Activated CD4-positive, alpha-beta T cell treated with anti-CD3 and anti-CD28 coated beads for 36 hours (primary cell): ENCODE measurements at regions of chr11 and their contacts with region 1.

Region 1: DNA sequence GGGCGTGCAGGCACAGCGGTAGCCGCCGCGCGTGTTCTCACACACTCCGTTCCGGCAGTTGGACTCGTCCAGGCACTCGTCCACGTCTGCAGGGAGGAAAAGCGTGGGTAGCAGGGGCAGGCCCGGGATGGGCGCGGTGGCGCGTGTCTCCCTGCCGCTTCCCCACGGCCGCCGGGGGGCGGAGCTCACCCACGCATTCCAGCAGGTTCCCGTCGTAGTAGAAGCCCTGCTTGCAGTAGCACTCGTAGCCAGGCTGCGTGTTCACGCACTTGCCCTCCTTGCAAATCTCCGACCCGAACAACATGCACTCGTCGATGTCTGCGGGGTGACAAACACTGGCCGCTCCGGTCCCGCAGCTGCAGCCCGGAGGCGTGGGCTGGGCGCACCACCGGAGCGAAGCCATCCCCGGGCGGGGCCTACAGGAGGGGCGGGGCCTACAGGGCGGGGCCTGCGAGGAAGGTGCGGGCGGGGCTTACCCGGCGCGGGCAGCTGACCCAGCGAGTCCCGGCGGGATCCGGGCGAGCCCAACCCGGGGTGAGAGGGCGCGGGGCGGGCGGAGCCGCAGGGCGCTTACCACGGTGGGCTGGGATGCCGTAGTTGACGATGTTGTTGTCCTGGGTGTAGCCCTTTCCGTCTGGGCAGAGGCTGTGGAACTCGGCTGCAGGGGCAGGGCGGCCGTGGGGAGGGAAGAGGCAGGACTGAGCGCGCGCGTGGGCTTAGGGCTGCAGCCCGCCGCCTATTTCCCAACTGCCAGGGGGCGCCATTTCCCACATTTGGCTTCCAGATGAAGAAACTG is 15.6 kb downstream of the SCYL1 start:
- DNase-seq: peak; percentile 93
- ATAC-seq: peak; percentile 89
- H3K4me3 Mint-ChIP-seq: peak overlapping the region; percentile 72
- H3K27ac Mint-ChIP-seq: peak overlapping the region; percentile 81
- H3K4me1 Mint-ChIP-seq: peaks cover 15% of the 10 kb centered on the region
- H3K27me3 Mint-ChIP-seq: no peaks in the 10 kb centered on the region

Region 2: DNA sequence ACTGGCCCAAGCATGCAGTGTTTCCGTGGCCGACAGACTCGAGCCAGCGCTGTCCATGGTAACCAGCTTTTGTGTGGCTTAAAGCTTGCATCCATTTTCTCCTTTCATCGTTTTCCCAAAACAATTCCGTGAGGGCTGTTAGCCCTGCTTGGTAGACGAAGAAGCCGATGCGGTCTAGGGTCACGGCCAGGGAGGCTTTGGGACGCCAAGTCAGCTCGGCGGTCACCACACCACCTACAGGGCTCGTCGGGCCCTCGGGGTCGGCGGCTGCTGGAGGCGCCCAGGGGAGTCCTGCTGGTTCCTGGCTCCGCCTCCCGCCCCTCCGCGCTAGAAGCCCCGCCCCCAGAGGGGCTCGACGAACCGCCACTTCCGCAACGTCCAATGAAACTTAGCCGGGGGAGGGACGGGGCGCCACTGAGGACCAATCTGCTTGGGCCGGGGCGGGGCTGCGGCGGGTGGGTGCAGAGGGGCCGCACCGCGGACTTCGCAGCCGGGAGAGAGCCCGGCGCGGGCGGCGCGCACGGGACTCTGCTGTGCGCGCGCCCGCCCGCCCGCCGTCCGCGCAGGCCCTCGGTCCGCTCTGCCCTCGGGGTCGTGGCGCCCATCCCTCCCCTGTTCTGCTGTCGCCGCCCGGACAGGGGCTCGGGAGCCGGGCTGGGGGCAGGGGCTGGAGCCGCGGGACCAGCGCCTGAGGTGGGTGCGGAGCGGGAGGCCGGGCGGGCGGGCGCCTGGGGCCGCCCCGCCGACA is 186.1 kb before region 1 on chr11 and contains the start of gene TIGD3:
- CTCF ChIA-PET with region 1: interaction called, 3 read pairs
- POLR2A ChIA-PET with region 1: no interaction called
- intact Hi-C with region 1: loop called in 1 of 2 experiments (anchors 1 kb)
- DNase-seq: peak; percentile 98
- ATAC-seq: peak; percentile 99
- H3K4me3 Mint-ChIP-seq: peak within 1 kb of the TSS; percentile 73
- H3K27ac Mint-ChIP-seq: peak within 1 kb of the TSS; percentile 42
- H3K4me1 Mint-ChIP-seq: peaks cover 13% of the 10 kb centered on the region
- H3K27me3 Mint-ChIP-seq: no peaks in the 10 kb centered on the region
- total RNA-seq, gene TIGD3: 0.58 to 1.1 TPM

Region 3: DNA sequence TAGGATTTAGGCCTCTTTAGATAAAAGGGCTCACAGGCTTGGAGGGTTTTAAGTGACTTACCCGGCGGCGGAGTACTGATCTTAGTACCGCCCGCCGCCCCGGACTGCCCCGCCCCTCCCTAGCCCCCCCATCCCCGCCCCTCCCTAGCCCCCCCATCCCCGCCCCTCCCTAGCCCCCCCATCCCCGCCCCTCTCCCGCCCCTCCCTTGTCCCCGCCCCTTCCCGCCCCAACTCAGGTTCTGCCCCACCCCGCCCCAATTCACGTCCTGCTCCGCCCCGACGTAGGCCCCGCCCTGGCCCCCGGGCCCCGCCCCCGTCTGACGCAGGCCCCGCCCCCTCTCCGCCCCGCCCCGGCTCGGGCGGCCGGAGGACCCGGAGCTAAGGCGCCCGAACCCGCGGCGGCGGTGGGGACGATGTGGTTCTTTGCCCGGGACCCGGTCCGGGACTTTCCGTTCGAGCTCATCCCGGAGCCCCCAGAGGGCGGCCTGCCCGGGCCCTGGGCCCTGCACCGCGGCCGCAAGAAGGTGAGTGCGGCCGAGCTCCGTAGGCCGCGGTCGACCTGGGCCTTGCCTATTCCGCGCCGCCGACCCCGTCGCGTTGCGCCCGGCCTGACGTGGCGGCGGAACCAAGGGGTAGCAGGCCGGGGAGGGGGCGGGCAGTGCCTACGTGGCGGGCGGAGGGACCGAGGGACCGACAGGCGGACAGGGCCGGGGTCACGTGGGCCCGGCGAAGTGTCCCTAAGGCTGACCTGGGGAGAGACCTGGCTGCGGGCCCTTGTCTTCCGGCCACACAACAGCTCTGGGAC is 15.6 kb before region 1 on chr11 and contains the start of gene SCYL1:
- CTCF ChIA-PET with region 1: interaction called, 26 read pairs
- POLR2A ChIA-PET with region 1: interaction called, 3 read pairs
- intact Hi-C with region 1: loop called in 1 of 2 experiments (anchors 1 kb)
- DNase-seq: peak; percentile 91
- ATAC-seq: peak; percentile 85
- H3K4me3 Mint-ChIP-seq: peak within 1 kb of the TSS; percentile 86
- H3K27ac Mint-ChIP-seq: peak within 1 kb of the TSS; percentile 93
- H3K4me1 Mint-ChIP-seq: peaks cover 51% of the 10 kb centered on the region
- H3K27me3 Mint-ChIP-seq: no peaks in the 10 kb centered on the region
- total RNA-seq, gene SCYL1: 66.5 to 78.8 TPM

Region 4: DNA sequence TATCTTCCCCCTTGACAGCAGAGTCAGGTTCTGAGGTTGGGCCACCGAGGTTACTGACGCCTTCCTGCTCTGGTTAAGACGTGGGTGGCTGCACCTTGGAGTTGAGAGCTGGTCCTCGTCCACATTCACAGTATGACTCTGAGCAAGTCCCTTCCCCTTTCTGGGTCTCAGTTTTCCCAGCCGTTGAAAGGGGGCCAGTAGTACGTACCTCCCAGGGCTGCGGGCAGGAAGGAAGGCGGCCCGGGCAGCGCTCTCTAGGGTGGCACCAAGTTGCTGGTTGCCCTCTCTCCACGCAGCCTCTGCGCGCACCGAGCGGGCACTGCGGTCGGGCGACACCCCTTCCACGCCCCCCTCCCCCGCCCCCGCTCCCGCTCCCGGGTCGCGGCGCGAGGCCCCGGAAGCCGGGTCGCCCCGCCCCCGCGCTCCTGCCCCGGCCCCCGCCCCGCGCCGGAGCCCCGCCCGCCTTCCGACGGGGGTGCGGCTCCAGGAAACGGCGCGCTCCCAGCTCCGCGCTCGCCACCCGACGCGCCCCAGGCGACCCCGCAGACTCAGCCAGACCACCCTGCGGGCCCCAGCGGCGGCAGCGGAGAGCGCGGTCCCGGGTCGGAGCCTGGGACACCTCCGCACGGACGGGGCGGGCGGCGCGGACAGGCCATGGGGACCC is 35.2 kb after region 1 on chr11 and contains the start of gene EHBP1L1:
- CTCF ChIA-PET with region 1: interaction called, 42 read pairs
- POLR2A ChIA-PET with region 1: interaction called, 6 read pairs
- intact Hi-C with region 1: loop called (anchors 1 kb)
- DNase-seq: peak; percentile 85
- ATAC-seq: peak; percentile 28
- H3K4me3 Mint-ChIP-seq: peak within 1 kb of the TSS; percentile 90
- H3K27ac Mint-ChIP-seq: peak within 1 kb of the TSS; percentile 95
- H3K4me1 Mint-ChIP-seq: peaks cover 49% of the 10 kb centered on the region
- H3K27me3 Mint-ChIP-seq: no peaks in the 10 kb centered on the region
- total RNA-seq, gene EHBP1L1: 88.3 to 98.8 TPM

Region 5: DNA sequence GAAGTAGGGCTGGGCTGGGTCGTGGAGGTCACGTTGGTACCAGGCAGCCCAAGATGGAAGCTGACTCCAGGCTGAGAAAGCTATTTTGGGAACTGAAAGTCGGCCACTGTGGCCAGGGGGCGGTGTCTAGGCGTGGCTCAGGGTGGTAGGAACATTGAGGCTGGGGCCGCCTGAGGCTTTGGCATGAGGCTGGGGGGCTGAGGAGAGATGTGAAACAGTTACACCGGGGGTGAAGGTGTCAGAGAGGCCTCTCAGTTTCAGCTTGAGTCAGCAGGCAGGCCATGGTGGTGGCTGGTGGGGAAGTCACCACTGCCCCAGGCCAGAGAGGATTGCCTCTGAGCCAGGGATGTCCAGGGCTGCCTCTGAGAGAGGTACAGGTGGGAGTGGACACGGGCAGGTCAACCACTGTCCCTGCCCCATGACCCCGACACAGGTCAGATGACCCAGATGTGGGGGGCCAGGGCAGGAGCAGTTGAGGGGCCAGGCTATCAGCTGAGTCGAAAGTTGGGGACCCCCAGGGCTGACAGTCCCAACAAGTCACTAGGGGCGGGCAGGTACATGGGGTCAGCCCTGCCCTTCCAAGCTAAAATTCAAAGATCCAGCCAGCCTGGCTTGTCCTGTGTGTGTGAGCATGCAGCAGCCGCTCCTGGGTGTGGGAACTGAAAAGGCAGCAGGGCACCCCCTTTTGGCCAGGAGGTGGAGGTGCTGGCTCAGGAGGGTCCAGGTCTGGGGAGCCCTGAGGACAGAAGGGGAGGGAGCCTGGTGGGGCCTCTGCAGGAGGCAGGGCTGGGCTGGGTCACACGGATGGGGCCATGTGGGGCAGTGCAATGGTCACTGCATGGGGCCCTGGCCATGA is 47.9 kb after region 1 on chr11:
- CTCF ChIA-PET with region 1: interaction called, 49 read pairs
- POLR2A ChIA-PET with region 1: interaction called, 3 read pairs
- intact Hi-C with region 1: loop called (anchors 1 kb)
- DNase-seq: peak; percentile 88
- ATAC-seq: peak; percentile 86
- H3K4me3 Mint-ChIP-seq: peak overlapping the region; percentile 43
- H3K27ac Mint-ChIP-seq: peak overlapping the region; percentile 90
- H3K4me1 Mint-ChIP-seq: peaks cover 39% of the 10 kb centered on the region
- H3K27me3 Mint-ChIP-seq: no peaks in the 10 kb centered on the region

Region 6: GRCh38 chr11:65637794-65638317 is 97.4 kb after region 1 on chr11 and contains the start of gene SIPA1:
- CTCF ChIA-PET with region 1: interaction called, 3 read pairs
- POLR2A ChIA-PET with region 1: no interaction called
- intact Hi-C with region 1: loop called in 1 of 2 experiments (anchors 1 kb)
- DNase-seq: peak; percentile 86
- ATAC-seq: peak; percentile 67
- H3K4me3 Mint-ChIP-seq: peak within 1 kb of the TSS; percentile 90
- H3K27ac Mint-ChIP-seq: peak within 1 kb of the TSS; percentile 95
- H3K4me1 Mint-ChIP-seq: peaks cover 42% of the 10 kb centered on the region
- H3K27me3 Mint-ChIP-seq: no peaks in the 10 kb centered on the region
- total RNA-seq, gene SIPA1: 181 to 202 TPM

Region 7: GRCh38 chr11:65652511-65653231 is 112.2 kb after region 1 on chr11:
- CTCF ChIA-PET with region 1: interaction called, 3 read pairs
- POLR2A ChIA-PET with region 1: no interaction called
- intact Hi-C with region 1: loop called in 1 of 2 experiments (anchors 1 kb)
- DNase-seq: peak; percentile 98
- ATAC-seq: peak; percentile 89
- H3K4me3 Mint-ChIP-seq: peak overlapping the region; percentile 79
- H3K27ac Mint-ChIP-seq: peak overlapping the region; percentile 95
- H3K4me1 Mint-ChIP-seq: peaks cover 45% of the 10 kb centered on the region
- H3K27me3 Mint-ChIP-seq: no peaks in the 10 kb centered on the region

Region 8: DNA sequence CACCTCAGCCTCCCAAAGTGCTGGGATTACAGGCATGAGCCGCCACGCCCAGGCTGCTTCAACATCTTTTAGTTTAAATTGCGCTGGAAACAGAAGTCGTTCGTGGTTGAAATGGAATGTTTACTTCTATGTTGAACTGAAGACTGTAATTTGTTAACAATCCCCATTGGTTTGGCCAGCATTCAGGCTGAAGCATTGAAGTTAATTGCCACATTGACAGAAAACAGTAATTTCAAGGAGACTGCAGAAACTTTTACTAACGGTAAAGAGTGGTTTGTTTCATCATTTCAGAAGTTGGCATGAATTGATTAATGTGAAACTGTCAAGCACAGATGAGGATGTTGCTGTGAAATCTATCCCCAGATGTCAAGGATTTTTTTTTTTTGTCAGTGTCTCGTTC is 226.0 kb after region 1 on chr11:
- CTCF ChIA-PET with region 1: no interaction called
- POLR2A ChIA-PET with region 1: no interaction called
- intact Hi-C with region 1: no loop called
- DNase-seq: no peak
- ATAC-seq: no peak
- H3K4me3 Mint-ChIP-seq: no peak overlapping the region
- H3K27ac Mint-ChIP-seq: no peak overlapping the region
- H3K4me1 Mint-ChIP-seq: peaks cover 4% of the 10 kb centered on the region
- H3K27me3 Mint-ChIP-seq: no peaks in the 10 kb centered on the region